A673 (cell line): ENCODE measurements at regions of chr9 and their contacts with region 1.

Region 1: DNA sequence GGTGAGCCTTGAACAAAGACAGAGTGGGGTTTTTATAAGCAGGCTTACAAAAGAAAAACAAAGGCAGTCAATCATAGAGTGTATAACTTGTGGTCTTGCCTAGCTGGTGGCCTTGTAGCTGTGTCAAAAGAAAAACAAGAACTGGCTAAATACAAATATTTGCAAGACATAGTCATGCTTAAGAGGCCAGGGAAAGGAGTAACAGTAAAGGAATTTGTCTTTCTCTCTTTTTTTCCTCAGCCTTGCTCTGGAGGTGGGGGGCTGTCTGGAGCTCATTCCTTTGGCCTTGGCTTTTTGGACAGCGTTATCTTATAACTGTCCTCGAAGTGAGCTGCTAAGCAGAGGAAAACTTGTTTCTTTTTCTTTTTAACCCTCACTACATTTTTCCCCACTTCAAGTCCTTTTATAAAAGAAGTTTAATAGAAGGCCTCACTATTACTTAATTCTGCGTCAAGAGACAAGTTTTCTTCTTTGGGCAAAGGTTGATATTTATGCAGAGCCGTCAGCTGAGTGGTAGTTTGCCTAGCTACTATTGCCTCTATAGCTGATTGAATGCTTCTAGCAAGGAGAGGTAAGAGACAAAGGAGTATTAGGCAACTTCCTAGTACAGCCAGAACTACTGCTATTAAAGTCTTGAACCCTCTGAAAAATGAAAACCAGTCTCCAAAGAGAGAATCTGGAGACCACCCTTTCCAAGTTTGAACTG is 14.3 kb downstream of the CEL start:
- DNase-seq: no peak
- H3K4me3 ChIP-seq: no peak overlapping the region
- H3K27ac ChIP-seq: no peak overlapping the region
- H3K4me1 ChIP-seq: no peaks in the 10 kb centered on the region
- H3K27me3 ChIP-seq: no peaks in the 10 kb centered on the region
- CTCF ChIP-seq: no peak

Region 2: GRCh38 chr9:133030317-133031129 is 45.6 kb before region 1 on chr9 and contains the start of gene GTF3C5:
- CTCF ChIA-PET with region 1: no interaction called
- POLR2A ChIA-PET with region 1: no interaction called
- intact Hi-C with region 1: no loop called
- DNase-seq: peak; percentile 99
- H3K4me3 ChIP-seq: peak within 1 kb of the TSS; percentile 83
- H3K27ac ChIP-seq: peak within 1 kb of the TSS; percentile 81
- H3K4me1 ChIP-seq: no peaks in the 10 kb centered on the region
- H3K27me3 ChIP-seq: no peaks in the 10 kb centered on the region
- CTCF ChIP-seq: no peak
- total RNA-seq, gene GTF3C5: 98.1 and 99.9 TPM in 2 replicates

Region 3: GRCh38 chr9:134024828-134025605 is 948.9 kb after region 1 on chr9 and contains the start of gene BRD3OS:
- CTCF ChIA-PET with region 1: no interaction called
- POLR2A ChIA-PET with region 1: interaction called, 15 read pairs
- intact Hi-C with region 1: no loop called
- DNase-seq: peak; percentile 99
- H3K4me3 ChIP-seq: peak within 1 kb of the TSS; percentile 92
- H3K27ac ChIP-seq: peak within 1 kb of the TSS; percentile 63
- H3K4me1 ChIP-seq: no peaks in the 10 kb centered on the region
- H3K27me3 ChIP-seq: no peaks in the 10 kb centered on the region
- CTCF ChIP-seq: no peak
- total RNA-seq, gene BRD3OS: 13.5 and 22.2 TPM in 2 replicates